A673 (cell line): ENCODE measurements at regions of chr14 and their contacts with region 1.

Region 1: GRCh38 chr14:89730687-89731086 is 223.8 kb downstream of the EFCAB11 start:
- DNase-seq: no peak
- H3K4me3 ChIP-seq: no peak overlapping the region
- H3K27ac ChIP-seq: no peak overlapping the region
- H3K4me1 ChIP-seq: no peaks in the 10 kb centered on the region
- H3K27me3 ChIP-seq: no peaks in the 10 kb centered on the region
- CTCF ChIP-seq: no peak

Region 2: GRCh38 chr14:89533761-89534160 is 196.9 kb before region 1 on chr14:
- CTCF ChIA-PET with region 1: no interaction called
- POLR2A ChIA-PET with region 1: interaction called, 14 read pairs
- intact Hi-C with region 1: no loop called
- DNase-seq: no peak
- H3K4me3 ChIP-seq: no peak overlapping the region
- H3K27ac ChIP-seq: no peak overlapping the region
- H3K4me1 ChIP-seq: no peaks in the 10 kb centered on the region
- H3K27me3 ChIP-seq: no peaks in the 10 kb centered on the region
- CTCF ChIP-seq: no peak

Region 3: GRCh38 chr14:89690139-89690538 is 40.5 kb before region 1 on chr14:
- CTCF ChIA-PET with region 1: no interaction called
- POLR2A ChIA-PET with region 1: no interaction called
- intact Hi-C with region 1: no loop called
- DNase-seq: no peak
- H3K4me3 ChIP-seq: no peak overlapping the region
- H3K27ac ChIP-seq: no peak overlapping the region
- H3K4me1 ChIP-seq: no peaks in the 10 kb centered on the region
- H3K27me3 ChIP-seq: no peaks in the 10 kb centered on the region
- CTCF ChIP-seq: no peak

Region 4: DNA sequence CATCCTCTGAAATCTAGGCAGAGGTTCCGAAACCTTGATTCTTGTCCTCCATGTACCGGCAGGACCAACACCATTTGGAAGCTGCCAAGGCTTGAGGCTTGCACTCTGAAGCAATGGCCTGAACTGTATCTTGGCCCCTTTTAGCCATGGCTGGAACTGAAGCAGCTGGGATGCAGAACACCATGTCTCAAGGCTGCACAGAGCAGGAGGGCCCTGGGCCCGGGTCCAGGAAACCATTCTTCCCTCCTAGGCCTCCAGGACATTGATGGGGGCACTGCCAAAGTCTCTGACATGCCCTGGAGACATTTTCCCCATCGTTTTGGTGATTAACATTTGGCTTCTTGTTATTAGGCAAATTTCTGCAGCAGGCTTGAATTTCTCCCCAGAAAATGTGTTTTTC is 25.1 kb after region 1 on chr14:
- CTCF ChIA-PET with region 1: no interaction called
- POLR2A ChIA-PET with region 1: no interaction called
- intact Hi-C with region 1: no loop called
- DNase-seq: no peak
- H3K4me3 ChIP-seq: no peak overlapping the region
- H3K27ac ChIP-seq: no peak overlapping the region
- H3K4me1 ChIP-seq: no peaks in the 10 kb centered on the region
- H3K27me3 ChIP-seq: no peaks in the 10 kb centered on the region
- CTCF ChIP-seq: no peak